ENCODE measurements at regions of chr17 and their contacts with region 1.

Region 1: GRCh38 chr17:21252796-21253645 is at the start of gene NATD1:
- DNase-seq: peak; percentile 60 to 82 (median 75)
- ATAC-seq: peak; percentile 90
- H3K4me3 ChIP-seq: peak within 1 kb of the TSS; percentile 73
- H3K4me3 Mint-ChIP-seq: peak within 1 kb of the TSS; percentile 78 to 97 (median 88)
- H3K27ac ChIP-seq: peak within 1 kb of the TSS; percentile 77
- H3K27ac Mint-ChIP-seq: peak within 1 kb of the TSS; percentile 66 to 97 (median 93)
- H3K4me1 ChIP-seq: peaks cover 7 to 12% of the 10 kb centered on the region in 2 donors
- H3K4me1 Mint-ChIP-seq: peaks cover 19 to 43% (median 39%) of the 10 kb centered on the region in 7 donors
- H3K27me3 ChIP-seq: no peaks in the 10 kb centered on the region
- H3K27me3 Mint-ChIP-seq: peaks cover 0 to 35% (median 0%) of the 10 kb centered on the region in 5 donors
- total RNA-seq, gene NATD1: 2.5 to 11.1 (median 8.9) TPM

Region 2: DNA sequence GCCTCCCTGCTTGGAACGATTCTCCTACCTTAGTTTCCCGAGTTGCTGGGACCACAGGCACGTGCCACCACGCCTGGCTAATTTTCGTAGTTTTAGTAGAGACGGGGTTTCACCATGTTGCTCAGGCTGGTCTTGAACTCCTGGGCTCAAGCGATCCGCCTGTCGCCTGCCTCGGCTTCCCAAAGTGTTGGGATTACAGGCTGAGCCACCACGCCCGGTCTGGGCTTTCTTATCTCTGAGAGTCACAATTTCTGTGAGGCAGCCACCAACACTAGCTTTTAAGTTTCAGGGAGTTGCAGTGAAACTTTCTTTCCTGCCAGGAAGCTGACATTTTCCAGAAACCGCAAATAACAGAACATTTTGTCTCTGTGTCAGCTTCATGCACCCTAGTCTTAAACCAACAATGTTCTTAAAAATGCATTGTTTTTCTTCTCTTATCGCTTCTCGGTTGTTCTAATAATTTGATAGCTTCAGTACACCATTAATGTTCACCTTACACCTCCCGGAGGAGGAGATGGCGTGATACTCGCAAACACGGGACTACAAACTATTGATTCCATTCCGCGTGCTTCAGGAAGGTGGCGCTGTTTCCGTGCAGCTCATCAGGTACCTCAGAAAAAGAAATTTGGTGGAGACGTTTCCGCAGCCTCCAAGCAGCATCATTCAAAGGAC is 133.6 kb before region 1 on chr17:
- CTCF ChIA-PET with region 1: no interaction called
- POLR2A ChIA-PET with region 1: interaction called, 3 read pairs
- intact Hi-C with region 1: loop called in 1 of 2 experiments (anchors 2 kb)
- DNase-seq: peak; percentile 36 to 76 (median 62)
- ATAC-seq: peak; percentile 91
- H3K4me3 ChIP-seq: no peak overlapping the region
- H3K4me3 Mint-ChIP-seq: peak overlapping the region in 7 of 10 donors; percentile 1 to 72 (median 40)
- H3K27ac ChIP-seq: no peak overlapping the region
- H3K27ac Mint-ChIP-seq: peak overlapping the region in 3 of 9 donors; percentile 6 to 47 (median 35)
- H3K4me1 ChIP-seq: peaks cover 0 to 5% of the 10 kb centered on the region in 2 donors
- H3K4me1 Mint-ChIP-seq: peaks cover 6 to 15% (median 10%) of the 10 kb centered on the region in 7 donors
- H3K27me3 ChIP-seq: no peaks in the 10 kb centered on the region
- H3K27me3 Mint-ChIP-seq: peaks cover 0 to 16% (median 5%) of the 10 kb centered on the region in 5 donors

Region 3: GRCh38 chr17:21275579-21276263 is 22.7 kb after region 1 on chr17:
- CTCF ChIA-PET with region 1: interaction called, 5 read pairs
- POLR2A ChIA-PET with region 1: interaction called, 44 read pairs
- intact Hi-C with region 1: loop called (anchors 1 to 2 kb)
- DNase-seq: peak; percentile 78 to 99 (median 86)
- ATAC-seq: peak; percentile 93
- H3K4me3 ChIP-seq: peak overlapping the region; percentile 71
- H3K4me3 Mint-ChIP-seq: peak overlapping the region; percentile 80 to 99 (median 94)
- H3K27ac ChIP-seq: peak overlapping the region; percentile 91
- H3K27ac Mint-ChIP-seq: peak overlapping the region; percentile 73 to 96 (median 92)
- H3K4me1 ChIP-seq: peaks cover 24 to 40% of the 10 kb centered on the region in 2 donors
- H3K4me1 Mint-ChIP-seq: peaks cover 34 to 52% (median 49%) of the 10 kb centered on the region in 7 donors
- H3K27me3 ChIP-seq: no peaks in the 10 kb centered on the region
- H3K27me3 Mint-ChIP-seq: no peaks in the 10 kb centered on the region

Region 4: GRCh38 chr17:21284319-21285163 is 31.5 kb after region 1 on chr17 and contains the start of gene MAP2K3:
- CTCF ChIA-PET with region 1: interaction called, 5 read pairs
- POLR2A ChIA-PET with region 1: interaction called, 12 read pairs
- intact Hi-C with region 1: loop called (anchors 1 kb)
- DNase-seq: peak; percentile 79 to 98 (median 84)
- ATAC-seq: peak; percentile 78
- H3K4me3 ChIP-seq: peak within 1 kb of the TSS; percentile 90
- H3K4me3 Mint-ChIP-seq: peak within 1 kb of the TSS; percentile 88 to 99 (median 96)
- H3K27ac ChIP-seq: peak within 1 kb of the TSS; percentile 78
- H3K27ac Mint-ChIP-seq: peak within 1 kb of the TSS; percentile 88 to 97 (median 96)
- H3K4me1 ChIP-seq: peaks cover 39 to 40% of the 10 kb centered on the region in 2 donors
- H3K4me1 Mint-ChIP-seq: peaks cover 32 to 57% (median 52%) of the 10 kb centered on the region in 7 donors
- H3K27me3 ChIP-seq: no peaks in the 10 kb centered on the region
- H3K27me3 Mint-ChIP-seq: no peaks in the 10 kb centered on the region
- total RNA-seq, gene MAP2K3: 37.5 to 127 (median 39.2) TPM

Region 5: GRCh38 chr17:21318439-21318838 is 65.4 kb after region 1 on chr17:
- CTCF ChIA-PET with region 1: no interaction called
- POLR2A ChIA-PET with region 1: no interaction called
- intact Hi-C with region 1: loop called in 1 of 2 experiments (anchors 1 kb)
- DNase-seq: no peak
- ATAC-seq: no peak
- H3K4me3 ChIP-seq: no peak overlapping the region
- H3K4me3 Mint-ChIP-seq: no peak overlapping the region
- H3K27ac ChIP-seq: no peak overlapping the region
- H3K27ac Mint-ChIP-seq: no peak overlapping the region
- H3K4me1 ChIP-seq: no peaks in the 10 kb centered on the region
- H3K4me1 Mint-ChIP-seq: peaks cover 0 to 7% (median 6%) of the 10 kb centered on the region in 7 donors
- H3K27me3 ChIP-seq: no peaks in the 10 kb centered on the region
- H3K27me3 Mint-ChIP-seq: peaks cover 0 to 5% (median 5%) of the 10 kb centered on the region in 5 donors

Measured in naive thymus-derived CD4-positive, alpha-beta T cell (primary cell).